ENCODE measurements at regions of chr1 and their contacts with region 1.

Region 1: DNA sequence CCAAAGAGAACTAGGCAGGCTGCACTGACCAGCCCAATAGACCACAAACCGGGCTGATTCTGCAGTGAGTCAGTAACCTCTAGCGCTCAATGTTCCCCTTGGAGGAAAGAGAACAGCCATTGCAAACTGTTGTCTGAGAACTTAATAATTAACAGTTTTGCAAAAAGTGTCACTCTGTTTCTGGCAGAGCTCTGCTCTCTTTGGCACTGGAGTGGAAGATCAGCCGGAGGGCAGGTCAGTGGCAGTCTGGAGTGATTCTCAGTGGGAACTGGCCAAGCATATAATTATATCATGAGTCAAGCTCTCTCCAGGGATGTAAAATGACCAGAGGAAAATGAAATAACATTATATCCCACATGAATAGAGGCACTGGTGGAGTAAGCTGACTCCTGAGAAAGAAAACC is 238.3 kb downstream of the HLX start:
- DNase-seq: peak; percentile 46 to 73
- ATAC-seq: peak; percentile 90 to 97 (median 94)
- H3K4me3 ChIP-seq: no peak overlapping the region
- H3K27ac ChIP-seq: peak overlapping the region; percentile 94
- H3K4me1 ChIP-seq: peaks cover 38% of the 10 kb centered on the region
- H3K27me3 ChIP-seq: no peaks in the 10 kb centered on the region
- CTCF ChIP-seq: no peak

Region 2: DNA sequence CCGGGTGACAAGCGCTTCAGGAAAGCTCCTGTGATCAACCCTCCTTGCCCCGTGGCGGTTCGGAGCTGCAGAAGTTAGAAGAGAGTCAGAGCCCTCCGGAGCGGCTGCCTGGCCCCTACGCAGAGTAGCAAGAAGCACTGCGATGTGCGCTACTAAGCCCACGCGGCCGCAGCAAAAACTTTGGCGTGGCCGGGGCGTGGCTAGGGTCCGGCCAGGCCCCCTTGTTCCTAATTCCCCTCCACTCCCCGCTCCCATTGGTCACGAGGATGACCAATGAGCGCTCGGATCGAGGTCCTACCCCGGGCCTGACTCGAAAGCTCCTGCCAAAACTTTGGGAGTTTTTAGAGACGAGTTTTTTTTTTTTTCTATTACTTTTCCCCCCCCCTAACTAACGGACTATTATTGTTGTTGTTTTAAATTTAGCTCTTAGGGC is 238.5 kb before region 1 on chr1 and contains the start of gene HLX:
- intact Hi-C with region 1: loop called in 1 of 2 experiments (anchors 10 kb)
- DNase-seq: peak; percentile 91 to 95
- ATAC-seq: peak; percentile 92 to 95 (median 94)
- H3K4me3 ChIP-seq: peak within 1 kb of the TSS; percentile 100
- H3K27ac ChIP-seq: peak within 1 kb of the TSS; percentile 90
- H3K4me1 ChIP-seq: peaks cover 13% of the 10 kb centered on the region
- H3K27me3 ChIP-seq: no peaks in the 10 kb centered on the region
- CTCF ChIP-seq: no peak
- total RNA-seq, gene HLX: 4.1 to 11.6 (median 7.3) TPM

Region 3: DNA sequence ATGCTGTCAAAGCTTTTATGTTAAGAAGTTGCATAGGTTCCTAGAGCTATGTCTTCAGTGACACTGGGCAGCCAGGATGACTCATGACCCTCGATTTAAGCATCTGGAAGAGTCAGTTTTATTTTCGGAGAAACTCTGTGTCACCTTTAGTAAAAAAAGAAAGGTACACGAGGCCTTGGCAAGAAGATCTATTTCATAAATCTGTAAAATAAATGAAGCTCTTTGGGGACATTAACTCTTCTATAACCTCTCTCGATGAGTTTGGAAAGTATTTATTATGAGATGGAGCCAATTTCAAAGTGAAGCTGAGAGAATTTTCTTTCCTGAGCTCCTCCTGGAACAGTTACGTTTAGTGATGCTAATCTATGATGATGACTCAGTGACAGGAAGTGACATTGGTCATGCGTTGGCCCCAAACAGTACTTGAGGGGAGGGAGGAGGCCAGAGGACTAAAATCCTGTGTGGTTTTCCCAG is 81.8 kb before region 1 on chr1:
- intact Hi-C with region 1: loop called in 1 of 2 experiments (anchors 5 kb)
- DNase-seq: no peak
- ATAC-seq: peak; percentile 87 to 96 (median 94)
- H3K4me3 ChIP-seq: peak overlapping the region; percentile 31
- H3K27ac ChIP-seq: peak overlapping the region; percentile 76
- H3K4me1 ChIP-seq: peaks cover 31% of the 10 kb centered on the region
- H3K27me3 ChIP-seq: no peaks in the 10 kb centered on the region
- CTCF ChIP-seq: no peak

Region 4: GRCh38 chr1:221097479-221098383 is 19.8 kb before region 1 on chr1:
- intact Hi-C with region 1: no loop called
- DNase-seq: no peak
- ATAC-seq: peak in 3 of 4 donors; percentile 25 to 37 (median 33)
- H3K4me3 ChIP-seq: no peak overlapping the region
- H3K27ac ChIP-seq: no peak overlapping the region
- H3K4me1 ChIP-seq: no peaks in the 10 kb centered on the region
- H3K27me3 ChIP-seq: no peaks in the 10 kb centered on the region
- CTCF ChIP-seq: no peak

Region 5: DNA sequence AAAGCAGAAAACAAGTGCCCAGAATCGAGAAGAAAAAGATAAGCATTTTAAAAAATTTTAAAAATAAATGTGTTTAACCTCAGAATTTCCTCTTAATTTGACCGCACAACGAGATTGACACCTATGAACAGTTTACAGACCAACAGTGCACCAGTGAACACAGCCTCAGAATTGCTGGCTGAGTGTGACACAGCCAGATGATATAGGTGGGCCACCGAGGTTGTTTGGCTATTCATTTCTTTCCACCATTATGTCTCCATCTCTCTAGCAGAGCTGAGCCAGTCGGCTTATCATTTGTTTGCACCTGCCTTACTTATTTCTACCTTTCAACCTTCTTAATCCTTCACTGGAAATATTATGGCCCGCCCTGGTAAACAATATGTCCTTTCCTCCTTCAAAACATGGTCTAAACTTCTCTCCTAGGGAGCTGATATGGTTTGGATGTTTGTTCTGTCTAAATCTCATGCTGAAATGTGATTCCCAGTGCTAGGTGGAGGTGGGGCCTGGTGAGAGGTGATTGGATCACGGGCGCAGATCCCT is 538.3 kb after region 1 on chr1:
- intact Hi-C with region 1: no loop called
- DNase-seq: no peak
- ATAC-seq: no peak
- H3K4me3 ChIP-seq: no peak overlapping the region
- H3K27ac ChIP-seq: no peak overlapping the region
- H3K4me1 ChIP-seq: no peaks in the 10 kb centered on the region
- H3K27me3 ChIP-seq: no peaks in the 10 kb centered on the region
- CTCF ChIP-seq: no peak